ENCODE measurements at regions of chr15 and their contacts with region 1.

Region 1: GRCh38 chr15:100596792-100597191 is 5.2 kb downstream of the LINS1 start:
- DNase-seq: peak; percentile 58 to 96 (median 87)
- ATAC-seq: peak; percentile 84
- H3K4me3 ChIP-seq: peak overlapping the region; percentile 42
- H3K4me3 Mint-ChIP-seq: peak overlapping the region; percentile 71
- H3K27ac ChIP-seq: peak overlapping the region; percentile 75 to 81
- H3K27ac Mint-ChIP-seq: no peak overlapping the region
- H3K4me1 ChIP-seq: peaks cover 69% of the 10 kb centered on the region
- H3K4me1 Mint-ChIP-seq: peaks cover 77% of the 10 kb centered on the region
- H3K27me3 ChIP-seq: no peaks in the 10 kb centered on the region
- H3K27me3 Mint-ChIP-seq: no peaks in the 10 kb centered on the region
- CTCF ChIP-seq: no peak

Region 2: DNA sequence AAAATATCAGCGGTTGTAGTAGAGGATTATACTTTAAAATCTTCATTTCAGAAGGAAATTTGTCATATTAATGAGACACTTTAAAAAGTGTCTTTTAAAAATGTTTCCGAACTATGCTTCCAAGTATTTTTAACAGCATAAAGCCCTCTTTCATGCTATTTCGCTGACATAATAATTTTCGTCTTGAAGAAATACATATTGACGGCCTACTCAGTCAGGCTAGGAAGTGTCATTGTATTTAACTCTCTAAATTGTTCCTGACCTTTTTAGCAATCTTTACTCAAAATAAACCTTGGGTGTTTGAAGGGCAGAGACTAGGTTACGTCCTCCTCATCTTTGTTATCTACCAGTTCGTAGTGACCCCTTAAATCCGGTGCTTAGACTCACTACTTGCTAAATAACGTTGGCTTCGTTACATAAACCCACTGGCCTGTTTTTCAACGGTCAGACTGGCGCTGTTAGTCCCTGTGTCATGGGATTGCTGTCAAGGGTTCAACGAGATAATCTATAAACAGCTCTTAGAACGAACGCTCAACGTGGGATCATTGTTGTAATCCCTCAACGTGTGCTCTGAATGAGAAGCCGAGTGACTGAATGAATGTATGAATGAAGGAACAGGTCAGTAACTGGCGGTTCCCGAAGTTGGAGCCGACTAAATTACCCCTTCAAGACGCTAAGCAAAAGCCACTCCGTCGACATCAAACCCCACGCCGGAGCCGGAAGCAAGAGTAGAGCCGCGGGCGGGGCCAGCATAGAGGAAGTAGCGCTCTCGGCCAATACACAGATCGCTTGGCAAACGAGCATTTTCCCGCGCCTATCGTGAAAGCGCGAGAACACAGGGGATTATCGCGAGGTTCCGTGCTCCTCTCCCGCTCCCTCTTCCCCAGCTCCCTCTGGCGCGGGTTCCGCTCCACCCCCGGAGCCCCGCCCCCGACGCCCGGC is 1346.0 kb before region 1 on chr15:
- CTCF ChIA-PET with region 1: no interaction called
- POLR2A ChIA-PET with region 1: no interaction called
- intact Hi-C with region 1: loop called in 1 of 2 experiments (anchors 5 kb)
- DNase-seq: peak; percentile 85 to 98 (median 90)
- ATAC-seq: peak; percentile 98
- H3K4me3 ChIP-seq: peak overlapping the region; percentile 75
- H3K4me3 Mint-ChIP-seq: peak overlapping the region; percentile 86
- H3K27ac ChIP-seq: peak overlapping the region; percentile 32 to 53
- H3K27ac Mint-ChIP-seq: peak overlapping the region; percentile 81
- H3K4me1 ChIP-seq: peaks cover 22% of the 10 kb centered on the region
- H3K4me1 Mint-ChIP-seq: peaks cover 24% of the 10 kb centered on the region
- H3K27me3 ChIP-seq: no peaks in the 10 kb centered on the region
- H3K27me3 Mint-ChIP-seq: no peaks in the 10 kb centered on the region
- CTCF ChIP-seq: no peak

Region 3: GRCh38 chr15:100572362-100572983 is 24.3 kb before region 1 on chr15:
- CTCF ChIA-PET with region 1: interaction called, 10 read pairs
- POLR2A ChIA-PET with region 1: interaction called, 44 read pairs
- intact Hi-C with region 1: no loop called
- DNase-seq: peak in 3 of 14 experiments; percentile 41 to 58 (median 53)
- ATAC-seq: peak; percentile 68
- H3K4me3 ChIP-seq: peak overlapping the region; percentile 12
- H3K4me3 Mint-ChIP-seq: peak overlapping the region; percentile 22
- H3K27ac ChIP-seq: peak overlapping the region in 1 of 2 donors; percentile 18
- H3K27ac Mint-ChIP-seq: peak overlapping the region; percentile 74
- H3K4me1 ChIP-seq: peaks cover 19% of the 10 kb centered on the region
- H3K4me1 Mint-ChIP-seq: peaks cover 62% of the 10 kb centered on the region
- H3K27me3 ChIP-seq: no peaks in the 10 kb centered on the region
- H3K27me3 Mint-ChIP-seq: no peaks in the 10 kb centered on the region
- CTCF ChIP-seq: peak; percentile 77